CD8-positive, alpha-beta T cell (primary cell): ENCODE measurements at regions of chr11 and their contacts with region 1.

Region 1: DNA sequence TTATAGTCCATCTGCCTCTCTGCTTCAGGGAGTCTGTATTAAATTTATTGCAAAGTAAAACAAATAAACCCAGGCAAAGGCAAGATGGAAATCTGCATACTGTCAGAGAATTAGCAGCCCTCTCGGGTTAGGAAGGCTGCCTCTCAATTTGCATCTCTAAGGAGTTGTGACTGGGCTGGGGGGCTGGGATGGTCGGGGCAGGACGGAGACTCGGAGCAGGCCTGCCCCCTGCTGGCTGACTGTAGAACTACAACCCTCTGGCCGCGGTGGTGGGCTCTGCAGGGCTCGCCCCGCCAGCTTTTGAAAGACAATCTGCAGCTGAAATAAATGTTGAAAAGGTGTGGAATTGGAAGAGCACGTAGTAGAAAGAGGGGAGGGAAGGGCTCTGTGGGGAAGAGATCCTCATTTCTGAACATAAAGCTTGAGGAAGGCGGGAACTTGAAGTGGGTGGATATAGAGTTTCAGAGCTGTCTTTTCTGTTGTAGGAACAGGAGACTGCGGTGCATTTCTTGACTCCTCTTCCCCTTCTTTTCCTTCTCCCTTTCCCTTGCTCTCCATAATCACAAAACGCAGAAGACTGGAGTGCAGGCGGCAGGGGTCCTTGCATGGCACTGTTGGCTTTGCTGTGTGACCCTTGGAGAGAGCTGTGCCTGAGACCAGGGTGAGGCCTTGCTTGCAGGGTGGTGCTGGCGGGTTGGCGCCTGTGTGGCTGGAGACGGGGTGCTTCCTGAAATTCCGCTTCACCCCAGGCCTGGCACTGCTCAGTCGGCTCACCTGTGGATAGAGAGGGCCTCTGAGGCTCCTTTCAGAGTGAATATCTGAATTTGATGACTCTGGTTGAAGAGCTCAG is 22.6 kb upstream of the PKNOX2 start:
- DNase-seq: peak; percentile 15 to 79 (median 62)
- ATAC-seq: peak; percentile 99
- H3K4me3 ChIP-seq: no peak overlapping the region
- H3K4me3 Mint-ChIP-seq: no peak overlapping the region
- H3K27ac ChIP-seq: no peak overlapping the region
- H3K27ac Mint-ChIP-seq: no peak overlapping the region
- H3K4me1 ChIP-seq: peaks cover 5% of the 10 kb centered on the region
- H3K4me1 Mint-ChIP-seq: peaks cover 5% of the 10 kb centered on the region
- H3K27me3 ChIP-seq: peaks cover 2 to 3% of the 10 kb centered on the region in 2 experiments
- H3K27me3 Mint-ChIP-seq: peaks cover 44% of the 10 kb centered on the region
- CTCF ChIP-seq: peak; percentile 99

Region 2: DNA sequence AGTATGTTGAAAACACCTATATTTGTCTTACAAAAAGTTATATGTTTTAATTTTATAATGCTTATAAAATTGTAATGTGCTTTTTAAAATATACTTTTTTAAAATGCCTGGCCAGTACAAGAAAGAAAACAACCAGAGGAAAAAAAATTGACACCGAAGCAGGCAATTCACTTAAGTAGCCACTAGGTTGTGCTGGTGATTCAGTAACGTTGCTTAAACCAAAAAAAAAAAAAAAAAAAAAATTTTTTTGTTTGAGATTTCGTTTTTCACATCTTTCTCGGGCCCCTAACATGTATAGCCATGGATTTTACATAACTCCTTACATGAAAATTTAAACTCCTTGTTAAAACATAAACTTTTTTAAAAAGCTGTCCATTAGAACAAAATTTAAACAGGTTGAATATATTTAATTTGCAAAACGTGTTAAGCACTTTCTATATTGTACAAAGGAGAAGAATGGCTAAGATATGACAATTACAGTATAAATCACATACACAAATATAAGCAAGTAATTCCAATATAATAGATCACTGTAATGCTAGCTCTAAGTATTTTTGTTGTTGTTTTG is 726.5 kb before region 1 on chr11:
- CTCF ChIA-PET with region 1: no interaction called
- POLR2A ChIA-PET with region 1: no interaction called
- intact Hi-C with region 1: loop called in 1 of 2 experiments (anchors 5 kb)
- DNase-seq: peak in 2 of 9 experiments; percentile 30 to 34
- ATAC-seq: no peak
- H3K4me3 ChIP-seq: no peak overlapping the region
- H3K4me3 Mint-ChIP-seq: no peak overlapping the region
- H3K27ac ChIP-seq: no peak overlapping the region
- H3K27ac Mint-ChIP-seq: no peak overlapping the region
- H3K4me1 ChIP-seq: no peaks in the 10 kb centered on the region
- H3K4me1 Mint-ChIP-seq: no peaks in the 10 kb centered on the region
- H3K27me3 ChIP-seq: peaks cover 0 to 6% of the 10 kb centered on the region in 2 experiments
- H3K27me3 Mint-ChIP-seq: peaks cover 8% of the 10 kb centered on the region
- CTCF ChIP-seq: peak; percentile 83

Region 3: DNA sequence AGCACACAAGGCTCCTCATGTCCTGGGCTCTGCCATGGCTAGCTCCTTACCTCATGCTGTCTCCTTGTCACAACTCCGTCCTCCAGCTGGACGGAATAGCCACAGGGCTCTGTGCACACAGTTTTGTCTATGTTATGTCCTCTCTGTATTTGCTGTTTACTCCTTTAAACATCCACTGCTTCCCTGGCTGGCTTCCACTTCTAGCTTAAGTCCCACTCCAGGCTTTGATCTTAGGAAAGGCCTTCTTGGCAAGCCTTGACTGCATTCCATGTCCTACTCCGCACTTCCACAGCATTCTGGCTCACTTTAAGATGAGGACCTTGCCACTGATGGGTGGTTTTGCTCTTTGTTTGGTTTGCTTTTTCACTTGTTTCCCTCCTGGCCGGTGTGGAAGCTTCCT is 299.6 kb before region 1 on chr11:
- CTCF ChIA-PET with region 1: no interaction called
- POLR2A ChIA-PET with region 1: no interaction called
- intact Hi-C with region 1: no loop called
- DNase-seq: no peak
- ATAC-seq: no peak
- H3K4me3 ChIP-seq: no peak overlapping the region
- H3K4me3 Mint-ChIP-seq: no peak overlapping the region
- H3K27ac ChIP-seq: no peak overlapping the region
- H3K27ac Mint-ChIP-seq: no peak overlapping the region
- H3K4me1 ChIP-seq: peaks cover 7% of the 10 kb centered on the region
- H3K4me1 Mint-ChIP-seq: peaks cover 10% of the 10 kb centered on the region
- H3K27me3 ChIP-seq: peaks cover 11 to 31% of the 10 kb centered on the region in 2 experiments
- H3K27me3 Mint-ChIP-seq: peaks cover 83% of the 10 kb centered on the region
- CTCF ChIP-seq: no peak

Region 4: DNA sequence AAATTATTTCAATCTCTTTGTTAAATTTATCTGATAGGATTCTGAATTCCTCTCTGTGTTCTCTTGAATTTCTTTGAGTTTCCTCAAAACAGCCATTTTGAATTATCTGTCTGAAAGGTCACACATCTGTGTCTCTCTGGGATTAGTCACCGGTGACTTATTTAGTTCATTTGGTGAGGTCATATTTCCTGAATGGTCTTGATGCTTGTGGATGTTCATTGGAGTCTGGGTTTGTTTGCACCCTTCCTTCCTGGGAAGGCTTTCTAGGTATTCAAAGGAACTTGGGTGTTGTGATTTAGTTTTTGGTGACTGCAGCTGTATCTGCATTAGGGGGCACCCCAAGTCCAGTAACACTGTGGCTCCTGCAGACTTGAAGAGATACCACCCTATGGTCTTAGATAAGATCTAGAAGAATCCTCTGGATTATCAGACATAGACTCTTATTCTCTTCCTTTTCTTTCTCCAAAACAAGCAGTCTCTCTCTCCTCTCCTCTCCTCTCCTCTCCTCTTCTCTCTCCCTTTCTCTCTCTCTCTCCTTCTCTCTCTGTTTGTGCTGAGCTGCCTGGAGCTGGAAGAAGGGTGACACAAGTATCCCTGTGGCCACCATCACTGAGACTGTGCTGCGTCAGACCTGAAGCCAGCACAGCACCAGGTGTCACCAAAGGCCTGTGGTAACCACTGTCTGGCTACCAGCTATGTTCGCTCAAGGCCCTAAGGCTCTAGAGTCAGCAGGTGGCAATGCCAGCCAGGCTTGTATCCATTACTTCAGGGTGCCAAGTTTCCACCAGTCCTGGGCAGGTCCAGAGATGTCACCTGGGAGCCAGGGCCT is 226.2 kb before region 1 on chr11:
- CTCF ChIA-PET with region 1: interaction called, 6 read pairs
- POLR2A ChIA-PET with region 1: no interaction called
- intact Hi-C with region 1: loop called in 1 of 2 experiments (anchors 1 kb)
- DNase-seq: peak in 3 of 9 experiments; percentile 25 to 33 (median 33)
- ATAC-seq: no peak
- H3K4me3 ChIP-seq: no peak overlapping the region
- H3K4me3 Mint-ChIP-seq: no peak overlapping the region
- H3K27ac ChIP-seq: no peak overlapping the region
- H3K27ac Mint-ChIP-seq: no peak overlapping the region
- H3K4me1 ChIP-seq: peaks cover 6% of the 10 kb centered on the region
- H3K4me1 Mint-ChIP-seq: peaks cover 2% of the 10 kb centered on the region
- H3K27me3 ChIP-seq: no peaks in the 10 kb centered on the region
- H3K27me3 Mint-ChIP-seq: peaks cover 3% of the 10 kb centered on the region
- CTCF ChIP-seq: no peak

Region 5: DNA sequence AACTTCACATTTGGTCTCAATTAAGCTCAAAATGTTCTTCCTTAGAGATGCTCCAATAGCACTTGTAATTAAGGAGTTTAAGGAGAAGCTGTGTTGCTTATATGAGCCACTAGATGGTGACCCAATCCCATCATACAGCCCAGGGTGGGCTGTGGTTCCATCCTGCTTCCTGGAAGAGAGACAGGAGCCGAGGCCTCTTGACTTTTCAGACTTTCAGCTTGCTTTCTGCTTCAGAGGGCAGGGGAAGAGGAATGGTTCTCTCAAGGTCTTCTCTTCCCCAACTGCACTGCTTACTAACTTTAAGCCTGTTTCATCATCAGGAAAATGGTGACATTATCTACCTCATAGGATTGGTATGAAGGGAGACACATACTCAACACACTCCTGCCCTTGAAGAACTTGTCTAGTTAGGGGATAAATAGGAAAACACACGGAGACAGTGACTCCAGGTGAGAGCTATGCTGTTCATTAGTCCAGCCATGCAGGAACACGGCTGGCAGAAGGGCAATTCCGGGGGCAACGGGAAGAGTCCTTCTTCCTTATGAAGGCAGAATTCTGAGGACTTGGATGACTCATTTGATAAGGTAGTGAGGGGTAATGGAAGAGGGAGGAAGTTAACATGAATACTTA is 50.5 kb before region 1 on chr11:
- CTCF ChIA-PET with region 1: interaction called, 31 read pairs
- POLR2A ChIA-PET with region 1: no interaction called
- intact Hi-C with region 1: loop called (anchors 1 kb)
- DNase-seq: peak in 3 of 9 experiments; percentile 30 to 48 (median 47)
- ATAC-seq: no peak
- H3K4me3 ChIP-seq: no peak overlapping the region
- H3K4me3 Mint-ChIP-seq: no peak overlapping the region
- H3K27ac ChIP-seq: no peak overlapping the region
- H3K27ac Mint-ChIP-seq: no peak overlapping the region
- H3K4me1 ChIP-seq: no peaks in the 10 kb centered on the region
- H3K4me1 Mint-ChIP-seq: no peaks in the 10 kb centered on the region
- H3K27me3 ChIP-seq: no peaks in the 10 kb centered on the region
- H3K27me3 Mint-ChIP-seq: no peaks in the 10 kb centered on the region
- CTCF ChIP-seq: no peak

Region 6: GRCh38 chr11:125123947-125124617 is 17.8 kb before region 1 on chr11:
- CTCF ChIA-PET with region 1: interaction called, 19 read pairs
- POLR2A ChIA-PET with region 1: no interaction called
- intact Hi-C with region 1: no loop called
- DNase-seq: peak in 5 of 9 experiments; percentile 28 to 64 (median 33)
- ATAC-seq: peak; percentile 48
- H3K4me3 ChIP-seq: no peak overlapping the region
- H3K4me3 Mint-ChIP-seq: no peak overlapping the region
- H3K27ac ChIP-seq: no peak overlapping the region
- H3K27ac Mint-ChIP-seq: no peak overlapping the region
- H3K4me1 ChIP-seq: no peaks in the 10 kb centered on the region
- H3K4me1 Mint-ChIP-seq: peaks cover 7% of the 10 kb centered on the region
- H3K27me3 ChIP-seq: peaks cover 0 to 12% of the 10 kb centered on the region in 2 experiments
- H3K27me3 Mint-ChIP-seq: peaks cover 24% of the 10 kb centered on the region
- CTCF ChIP-seq: peak; percentile 18